GM18951 (cell line): ENCODE measurements at regions of chr12 and their contacts with region 1.

Region 1: GRCh38 chr12:104456417-104456949 is at the start of gene CHST11:
- POLR2A ChIP-seq: no peak

Region 2: DNA sequence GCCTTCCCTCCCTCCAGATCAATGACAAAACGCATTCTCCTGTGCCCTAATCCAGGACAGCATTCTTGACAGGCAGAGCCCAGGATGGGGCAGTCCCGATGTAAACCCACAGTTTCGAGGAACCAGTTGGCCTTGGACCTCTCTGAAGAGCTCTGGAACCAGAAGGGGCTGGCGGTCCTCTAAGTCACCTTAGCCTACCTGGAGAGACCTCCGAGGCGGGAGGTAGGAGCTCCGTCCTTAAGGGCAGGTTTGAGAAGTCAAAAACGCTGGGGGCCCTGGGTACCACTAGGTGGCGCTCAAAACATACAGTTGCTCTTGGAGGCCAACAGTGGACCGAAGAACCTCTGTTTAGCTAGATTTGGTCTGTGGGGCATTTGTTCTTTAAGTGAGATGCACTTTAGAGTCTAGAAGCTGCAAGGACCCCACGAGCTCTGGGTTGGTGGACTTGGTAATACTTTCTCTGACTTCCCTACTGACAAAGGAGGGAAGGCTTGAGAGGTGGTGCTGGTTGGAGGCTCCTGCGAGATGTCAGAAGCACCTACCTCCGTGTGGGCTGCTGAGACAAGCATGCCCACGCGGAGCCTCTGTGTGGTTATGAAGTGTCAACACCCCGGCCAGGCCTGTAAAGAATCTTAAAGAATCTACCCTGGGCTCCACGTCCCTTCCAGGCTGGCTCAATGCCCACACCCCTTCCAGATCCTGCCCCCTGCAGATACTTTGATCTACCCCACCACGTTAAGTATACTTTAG is 74.6 kb before region 1 on chr12:
- in situ Hi-C with region 1: loop called (anchors 10 kb)
- POLR2A ChIP-seq: no peak